Activated T-helper 1 cell treated with anti-CD3 and anti-CD28 coated beads, Interleukin-12 subunit alpha, Interleukin-12 subunit beta, Interleukin-2, Interleukin-4 antibody, amounts not matched to agents 30 ng/mL and 10 ng/mL and 1 ng/mL, durations not matched to agents 14 hours and 24 hours and 36 hours (primary cell): ENCODE measurements at regions of chr13 and their contacts with region 1.

Region 1: DNA sequence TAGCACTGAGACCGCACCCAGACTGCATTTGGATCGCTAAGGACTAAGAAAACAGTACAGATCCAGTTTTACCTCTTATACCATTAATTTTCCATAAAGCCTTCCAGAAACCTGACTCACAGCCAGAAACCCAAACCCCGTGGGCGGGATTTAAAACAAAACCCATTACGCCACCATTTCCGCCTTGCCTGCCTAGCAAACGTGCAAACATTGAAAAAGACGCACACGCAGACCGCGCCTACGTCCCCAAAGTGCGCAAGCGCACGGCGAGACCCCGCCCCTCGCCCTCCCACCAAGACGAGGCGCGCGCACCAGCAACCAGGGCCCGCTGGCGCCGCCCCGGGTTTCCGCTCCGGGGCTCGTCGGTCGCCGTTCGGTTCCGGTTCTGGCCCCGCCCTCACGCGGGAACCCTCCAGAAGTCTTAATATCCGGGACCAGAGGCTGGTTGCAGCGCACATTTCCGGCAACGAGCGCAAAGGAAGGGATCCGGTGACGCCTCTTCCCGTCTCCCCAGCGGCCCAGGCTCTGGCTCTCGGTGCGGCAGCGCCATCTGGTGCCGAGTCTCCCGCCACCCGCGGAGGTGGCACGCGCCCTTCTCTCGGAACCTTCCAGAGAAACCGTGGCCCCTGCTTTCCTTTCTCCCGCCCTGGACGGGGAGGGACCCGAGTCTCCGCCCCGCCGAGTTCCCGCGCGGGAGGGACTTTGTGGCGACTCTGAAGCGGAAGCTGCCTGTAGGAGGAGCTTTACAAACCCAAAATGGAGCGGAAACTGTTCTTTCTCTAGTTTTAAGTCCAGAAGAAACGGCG is 256.9 kb upstream of the STARD13 start:
- DNase-seq: peak; percentile 99
- H3K4me3 Mint-ChIP-seq: peak overlapping the region; percentile 90
- H3K27ac Mint-ChIP-seq: peak overlapping the region; percentile 100
- H3K4me1 Mint-ChIP-seq: peaks cover 53% of the 10 kb centered on the region
- H3K27me3 Mint-ChIP-seq: no peaks in the 10 kb centered on the region

Region 2: DNA sequence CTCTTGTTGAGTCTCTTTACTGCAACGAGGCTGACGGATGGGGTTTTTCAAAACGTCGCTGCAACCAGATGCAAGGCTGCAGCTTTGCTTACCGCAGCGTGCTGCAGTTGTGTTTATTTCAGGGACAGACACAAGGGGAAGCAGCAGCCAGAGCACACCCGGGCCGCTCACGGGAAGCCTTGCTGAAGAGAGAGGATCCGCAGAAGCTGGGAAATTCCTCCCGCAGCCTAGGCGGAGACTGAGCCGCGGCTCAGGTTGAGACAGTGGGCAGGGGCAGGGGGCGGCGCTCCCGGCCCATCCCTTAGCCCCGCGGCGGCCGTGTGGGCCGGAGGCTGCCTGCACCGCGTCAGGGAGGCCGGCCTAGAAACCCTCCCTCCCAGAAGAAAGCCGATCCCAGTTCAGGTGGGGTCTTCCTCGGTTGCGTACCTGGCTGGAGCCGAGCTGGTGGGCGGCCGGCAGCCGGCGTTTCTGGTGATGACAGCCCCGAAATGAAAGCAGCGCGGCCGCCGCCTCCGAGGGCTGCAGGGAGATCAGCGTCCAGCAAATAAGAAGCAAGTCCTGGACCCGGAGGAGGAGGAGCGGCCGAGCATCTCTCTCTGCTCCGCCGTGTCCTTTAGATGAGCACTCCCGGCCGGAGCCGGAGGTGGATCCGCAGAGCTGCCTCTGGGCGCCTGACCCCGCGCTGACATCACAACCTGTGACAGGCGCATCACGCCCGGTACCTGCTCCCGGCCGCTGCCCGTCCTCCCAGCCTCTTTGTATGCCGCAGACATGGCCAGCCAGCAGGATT is 1511.3 kb before region 1 on chr13 and contains the start of gene FRY:
- intact Hi-C with region 1: loop called (anchors 10 kb)
- DNase-seq: peak; percentile 44
- H3K4me3 Mint-ChIP-seq: peak within 1 kb of the TSS; percentile 94
- H3K27ac Mint-ChIP-seq: peak within 1 kb of the TSS; percentile 82
- H3K4me1 Mint-ChIP-seq: peaks cover 52% of the 10 kb centered on the region
- H3K27me3 Mint-ChIP-seq: peaks cover 6% of the 10 kb centered on the region
- total RNA-seq, gene FRY: 2.4 and 3.2 TPM in 2 replicates

Region 3: GRCh38 chr13:32650705-32651311 is 891.7 kb before region 1 on chr13:
- intact Hi-C with region 1: loop called (anchors 2 kb)
- DNase-seq: peak; percentile 42
- H3K4me3 Mint-ChIP-seq: no peak overlapping the region
- H3K27ac Mint-ChIP-seq: no peak overlapping the region
- H3K4me1 Mint-ChIP-seq: peaks cover 52% of the 10 kb centered on the region
- H3K27me3 Mint-ChIP-seq: no peaks in the 10 kb centered on the region

Region 4: DNA sequence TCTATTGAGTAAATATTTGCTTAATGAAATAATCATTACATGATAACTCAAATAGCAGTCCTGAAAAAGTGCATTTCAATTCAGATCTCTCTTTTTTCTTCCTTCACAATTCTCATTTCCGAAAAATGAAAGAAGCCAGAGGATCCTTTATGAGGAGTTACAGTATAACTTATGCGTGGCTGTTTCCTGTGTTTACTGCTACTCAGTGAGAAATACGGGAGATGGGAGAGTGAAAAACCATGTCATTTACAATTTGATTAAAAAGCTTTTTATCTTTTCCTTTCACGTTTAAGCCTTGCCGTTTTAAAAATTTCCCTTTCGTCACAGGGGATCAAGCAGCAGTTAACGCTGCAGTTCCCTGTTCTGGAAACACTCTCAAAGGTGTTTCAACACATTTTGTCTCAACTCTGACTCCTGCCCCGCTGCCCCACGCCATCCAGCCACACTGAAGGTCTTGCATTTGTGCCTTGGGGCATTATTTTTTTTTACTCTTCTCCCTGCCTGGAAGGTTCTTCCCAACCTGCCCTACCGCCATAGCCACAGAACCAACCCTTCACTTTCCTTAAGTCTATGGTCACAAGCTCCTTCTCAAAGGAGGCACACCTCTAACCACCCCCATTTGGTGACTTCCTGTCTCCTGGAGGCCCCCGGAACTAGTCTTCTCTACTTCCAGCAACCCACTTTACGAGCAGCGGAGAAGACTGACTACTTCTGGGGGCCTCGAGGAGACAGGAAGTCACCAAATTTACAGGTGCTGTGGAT is 509.3 kb before region 1 on chr13:
- intact Hi-C with region 1: loop called (anchors 5 kb)
- DNase-seq: no peak
- H3K4me3 Mint-ChIP-seq: peak overlapping the region; percentile 83
- H3K27ac Mint-ChIP-seq: peak overlapping the region; percentile 94
- H3K4me1 Mint-ChIP-seq: peaks cover 13% of the 10 kb centered on the region
- H3K27me3 Mint-ChIP-seq: peaks cover 2% of the 10 kb centered on the region

Region 5: GRCh38 chr13:33204130-33204927 is 338.2 kb before region 1 on chr13:
- intact Hi-C with region 1: loop called (anchors 1 kb)
- DNase-seq: no peak
- H3K4me3 Mint-ChIP-seq: peak overlapping the region; percentile 78
- H3K27ac Mint-ChIP-seq: peak overlapping the region; percentile 76
- H3K4me1 Mint-ChIP-seq: peaks cover 65% of the 10 kb centered on the region
- H3K27me3 Mint-ChIP-seq: no peaks in the 10 kb centered on the region

Region 6: GRCh38 chr13:33723772-33724435 is 181.4 kb after region 1 on chr13:
- intact Hi-C with region 1: loop called (anchors 1 kb)
- DNase-seq: peak; percentile 51
- H3K4me3 Mint-ChIP-seq: no peak overlapping the region
- H3K27ac Mint-ChIP-seq: peak overlapping the region; percentile 84
- H3K4me1 Mint-ChIP-seq: peaks cover 49% of the 10 kb centered on the region
- H3K27me3 Mint-ChIP-seq: no peaks in the 10 kb centered on the region